ENCODE measurements at regions of chr5 and their contacts with region 1.

Region 1: DNA sequence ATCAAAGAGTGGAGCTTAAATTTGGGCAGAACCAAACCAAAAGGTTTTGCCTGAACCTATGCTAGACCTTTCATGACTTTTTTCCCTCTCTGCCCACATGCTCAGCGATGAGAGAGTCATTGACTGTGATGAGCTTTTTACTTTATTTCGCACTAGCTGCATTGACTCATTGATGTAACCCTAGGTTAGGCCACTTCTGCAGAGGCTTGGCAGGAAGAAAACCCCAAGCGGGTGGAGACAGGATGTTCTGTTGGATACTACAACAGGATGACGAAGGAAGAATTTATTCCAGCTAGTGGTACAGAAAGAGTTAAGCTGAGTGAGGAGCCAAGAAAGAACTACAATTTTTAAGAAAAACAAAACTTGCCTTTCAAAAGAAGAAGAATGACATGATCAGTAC is 18.4 kb downstream of the AGXT2 start:
- DNase-seq: no peak
- ATAC-seq: no peak
- H3K4me3 ChIP-seq: no peak overlapping the region
- H3K27ac ChIP-seq: no peak overlapping the region
- H3K4me1 ChIP-seq: peaks cover 28% of the 10 kb centered on the region
- H3K27me3 ChIP-seq: no peaks in the 10 kb centered on the region; a peak in 1 of 5 replicates
- CTCF ChIP-seq: no peak
- EP300 ChIP-seq: no peak
- POLR2A ChIP-seq: no peak
- RAD21 ChIP-seq: no peak

Region 2: GRCh38 chr5:35319333-35320002 is 290.1 kb after region 1 on chr5:
- CTCF ChIA-PET with region 1: no interaction called
- POLR2A ChIA-PET with region 1: no interaction called
- in situ Hi-C with region 1: no loop called
- intact Hi-C with region 1: loop called (anchors 10 kb)
- DNase-seq: no peak
- ATAC-seq: no peak
- H3K4me3 ChIP-seq: no peak overlapping the region
- H3K27ac ChIP-seq: no peak overlapping the region
- H3K4me1 ChIP-seq: no peaks in the 10 kb centered on the region
- H3K27me3 ChIP-seq: no peaks in the 10 kb centered on the region
- CTCF ChIP-seq: no peak
- EP300 ChIP-seq: no peak
- POLR2A ChIP-seq: no peak
- RAD21 ChIP-seq: no peak

Measured in HepG2 (cell line).